A549 (cell line): ENCODE measurements at regions of chr1 and their contacts with region 1.

Region 1: GRCh38 chr1:202274611-202275010 is 67.1 kb downstream of the UBE2T start:
- DNase-seq: peak; percentile 50 to 54
- ATAC-seq: peak in 1 of 2 experiments; percentile 87; a peak in 3 of 6 replicates
- H3K4me3 ChIP-seq: no peak overlapping the region
- H3K27ac ChIP-seq: no peak overlapping the region
- H3K4me1 ChIP-seq: no peaks in the 10 kb centered on the region
- CTCF ChIP-seq: peak; percentile 57
- EP300 ChIP-seq: no peak
- POLR2A ChIP-seq: no peak
- RAD21 ChIP-seq: peak; percentile 58 to 78

Region 2: GRCh38 chr1:201982623-201983379 is 291.8 kb before region 1 on chr1 and contains the start of gene RNPEP:
- CTCF ChIA-PET with region 1: no interaction called
- POLR2A ChIA-PET with region 1: no interaction called
- DNase-seq: peak; percentile 82 to 88
- ATAC-seq: peak; percentile 91 to 93
- H3K4me3 ChIP-seq: peak within 1 kb of the TSS; percentile 60
- H3K27ac ChIP-seq: peak within 1 kb of the TSS; percentile 88 to 97
- H3K4me1 ChIP-seq: peaks cover 14% of the 10 kb centered on the region
- CTCF ChIP-seq: no peak; the same call in none of the 3 replicates
- EP300 ChIP-seq: no peak
- POLR2A ChIP-seq: peak; percentile 88
- RAD21 ChIP-seq: no peak
- polyA plus RNA-seq, gene RNPEP: 80.4 and 87.6 TPM in 2 replicates

Region 3: GRCh38 chr1:202207292-202207691 is 67.3 kb before region 1 on chr1:
- CTCF ChIA-PET with region 1: no interaction called
- POLR2A ChIA-PET with region 1: no interaction called
- DNase-seq: peak in 1 of 2 experiments; percentile 48
- ATAC-seq: peak in 1 of 2 experiments; percentile 80; a peak in 3 of 6 replicates
- H3K4me3 ChIP-seq: no peak overlapping the region
- H3K27ac ChIP-seq: peak overlapping the region in 1 of 2 experiments; percentile 38; a peak in 1 of 6 replicates
- H3K4me1 ChIP-seq: peaks cover 6% of the 10 kb centered on the region
- CTCF ChIP-seq: no peak
- EP300 ChIP-seq: no peak
- POLR2A ChIP-seq: no peak
- RAD21 ChIP-seq: no peak

Region 4: DNA sequence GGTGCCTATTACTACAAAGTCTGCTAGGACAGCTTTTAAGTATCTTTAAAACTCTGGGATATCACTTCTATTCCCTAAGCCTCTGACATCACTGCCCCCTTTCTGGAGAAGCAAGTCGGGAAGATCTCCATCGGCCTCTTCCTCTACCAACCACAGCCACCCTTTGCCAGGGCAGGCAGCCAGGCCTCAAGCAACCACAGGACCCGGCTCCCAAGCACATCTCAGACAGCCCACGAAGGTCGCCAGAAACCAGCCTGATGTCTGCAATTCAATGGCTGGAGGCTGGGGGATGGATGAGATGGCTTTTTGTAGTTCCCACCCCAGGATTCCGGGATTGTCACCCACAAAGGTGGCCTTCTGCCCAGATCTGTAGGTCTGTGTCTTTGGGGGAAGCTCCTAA is 10.3 kb before region 1 on chr1:
- CTCF ChIA-PET with region 1: interaction called, 11 read pairs
- POLR2A ChIA-PET with region 1: no interaction called
- DNase-seq: no peak
- ATAC-seq: no peak
- H3K4me3 ChIP-seq: no peak overlapping the region
- H3K27ac ChIP-seq: no peak overlapping the region
- H3K4me1 ChIP-seq: no peaks in the 10 kb centered on the region
- CTCF ChIP-seq: no peak
- EP300 ChIP-seq: no peak
- POLR2A ChIP-seq: no peak
- RAD21 ChIP-seq: no peak

Region 5: GRCh38 chr1:202291961-202292712 is 17.5 kb after region 1 on chr1:
- CTCF ChIA-PET with region 1: interaction called, 10 read pairs
- POLR2A ChIA-PET with region 1: no interaction called
- DNase-seq: peak; percentile 57 to 68
- ATAC-seq: peak; percentile 69 to 83
- H3K4me3 ChIP-seq: no peak overlapping the region
- H3K27ac ChIP-seq: peak overlapping the region; percentile 45 to 59; a peak in 5 of 6 replicates
- H3K4me1 ChIP-seq: peaks cover 22% of the 10 kb centered on the region
- CTCF ChIP-seq: no peak
- EP300 ChIP-seq: no peak
- POLR2A ChIP-seq: no peak
- RAD21 ChIP-seq: no peak

Region 6: DNA sequence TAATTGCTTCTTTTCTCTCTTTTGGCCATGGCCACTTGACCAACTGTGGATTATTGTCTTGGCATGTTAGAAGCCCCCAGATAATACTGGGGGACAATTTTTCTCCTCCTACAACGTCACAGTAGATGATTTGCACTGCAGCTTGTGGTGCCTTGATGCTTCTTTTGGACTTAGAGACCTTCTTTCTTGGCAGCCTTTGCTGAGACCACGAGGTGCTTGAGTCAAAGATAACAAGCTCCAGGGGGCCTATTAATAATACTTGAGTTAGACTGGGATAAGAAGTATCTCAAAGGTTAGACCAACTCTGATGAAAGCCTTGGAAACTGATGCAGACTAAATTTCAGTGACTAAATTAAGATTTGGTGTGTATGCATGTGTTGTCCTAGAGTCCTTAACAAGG is 77.1 kb after region 1 on chr1:
- CTCF ChIA-PET with region 1: no interaction called
- POLR2A ChIA-PET with region 1: no interaction called
- DNase-seq: no peak
- ATAC-seq: no peak
- H3K4me3 ChIP-seq: no peak overlapping the region
- H3K27ac ChIP-seq: peak overlapping the region in 1 of 2 experiments; percentile 16; a peak in 2 of 6 replicates
- H3K4me1 ChIP-seq: peaks cover 50% of the 10 kb centered on the region
- CTCF ChIP-seq: no peak
- EP300 ChIP-seq: no peak
- POLR2A ChIP-seq: no peak
- RAD21 ChIP-seq: no peak